ENCODE measurements at regions of chr2 and their contacts with region 1.

Region 1: DNA sequence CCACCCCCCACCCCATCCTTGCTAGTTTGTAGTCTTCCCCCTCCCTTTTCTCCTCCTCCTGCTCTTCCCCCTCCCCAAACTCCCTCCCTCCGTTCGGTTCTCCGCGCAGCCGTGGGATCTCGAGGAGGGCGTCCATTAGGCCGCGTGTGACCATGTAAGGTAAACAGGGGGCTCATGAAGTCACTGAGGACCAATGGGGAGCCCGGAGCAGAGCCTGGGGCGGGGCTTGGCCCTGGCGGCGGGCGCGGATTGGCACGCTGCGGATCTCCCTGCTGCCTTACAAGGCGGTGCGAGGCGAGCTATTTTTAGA is 246 bp upstream of the KLF7 start:
- DNase-seq: peak; percentile 98 to 99
- H3K4me3 ChIP-seq: peak overlapping the region; percentile 54 to 97 (median 76)
- H3K27ac ChIP-seq: peak overlapping the region; percentile 99
- H3K4me1 ChIP-seq: peaks cover 0 to 23% (median 20%) of the 10 kb centered on the region in 4 experiments; a peak in 4 of 7 replicates
- H3K27me3 ChIP-seq: no peaks in the 10 kb centered on the region; a peak in 2 of 7 replicates
- CTCF ChIP-seq: no peak; a peak in 1 of 4 replicates
- EP300 ChIP-seq: peak in 1 of 2 experiments; percentile 79; a peak in 1 of 3 replicates
- POLR2A ChIP-seq: no peak
- RAD21 ChIP-seq: no peak

Region 2: DNA sequence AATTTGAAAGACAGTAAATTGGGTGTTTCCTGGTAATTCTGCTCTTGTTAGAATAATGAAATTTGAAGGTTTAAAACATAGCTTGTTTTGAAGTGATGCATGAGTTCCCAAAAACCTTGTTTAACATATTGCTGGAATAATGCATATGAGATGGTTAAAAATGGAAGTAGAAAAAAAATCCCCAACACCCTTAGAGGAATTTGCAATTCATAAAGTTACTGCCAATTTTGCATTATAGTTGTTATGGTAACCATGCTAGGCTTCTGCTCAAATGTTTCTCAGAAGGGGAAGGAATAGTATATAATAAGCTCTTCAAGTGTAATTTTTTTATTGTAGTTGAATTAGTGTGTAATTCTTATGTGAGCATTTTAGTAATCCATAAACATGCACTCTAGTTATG is 351.5 kb before region 1 on chr2:
- CTCF ChIA-PET with region 1: no interaction called
- POLR2A ChIA-PET with region 1: no interaction called
- DNase-seq: no peak
- H3K4me3 ChIP-seq: peak overlapping the region in 1 of 4 experiments; percentile 2; a peak in 1 of 8 replicates
- H3K27ac ChIP-seq: no peak overlapping the region
- H3K4me1 ChIP-seq: peaks cover 0 to 12% (median 2%) of the 10 kb centered on the region in 4 experiments; a peak in 2 of 7 replicates
- H3K27me3 ChIP-seq: no peaks in the 10 kb centered on the region
- CTCF ChIP-seq: no peak
- EP300 ChIP-seq: no peak
- POLR2A ChIP-seq: no peak
- RAD21 ChIP-seq: no peak

Region 3: GRCh38 chr2:207115715-207116364 is 50.2 kb before region 1 on chr2:
- CTCF ChIA-PET with region 1: no interaction called
- POLR2A ChIA-PET with region 1: no interaction called
- DNase-seq: no peak
- H3K4me3 ChIP-seq: no peak overlapping the region
- H3K27ac ChIP-seq: no peak overlapping the region
- H3K4me1 ChIP-seq: no peaks in the 10 kb centered on the region; a peak in 1 of 7 replicates
- H3K27me3 ChIP-seq: no peaks in the 10 kb centered on the region
- CTCF ChIP-seq: peak in 2 of 3 experiments; percentile 4 to 27; a peak in 1 of 4 replicates
- EP300 ChIP-seq: no peak
- POLR2A ChIP-seq: no peak
- RAD21 ChIP-seq: peak; percentile 9 to 34; a peak in 3 of 4 replicates

Region 4: GRCh38 chr2:207143215-207144172 is 22.5 kb before region 1 on chr2:
- CTCF ChIA-PET with region 1: interaction called, 3 read pairs
- POLR2A ChIA-PET with region 1: interaction called, 15 read pairs
- DNase-seq: peak in 1 of 2 experiments; percentile 49
- H3K4me3 ChIP-seq: no peak overlapping the region
- H3K27ac ChIP-seq: no peak overlapping the region
- H3K4me1 ChIP-seq: peaks cover 3 to 14% (median 8%) of the 10 kb centered on the region in 4 experiments; a peak in 5 of 7 replicates
- H3K27me3 ChIP-seq: no peaks in the 10 kb centered on the region
- CTCF ChIP-seq: no peak
- EP300 ChIP-seq: no peak
- POLR2A ChIP-seq: no peak
- RAD21 ChIP-seq: no peak

Region 5: GRCh38 chr2:207149249-207150213 is 16.5 kb before region 1 on chr2:
- CTCF ChIA-PET with region 1: interaction called, 6 read pairs
- POLR2A ChIA-PET with region 1: interaction called, 103 read pairs
- DNase-seq: no peak
- H3K4me3 ChIP-seq: no peak overlapping the region
- H3K27ac ChIP-seq: no peak overlapping the region
- H3K4me1 ChIP-seq: peaks cover 10 to 26% (median 22%) of the 10 kb centered on the region in 4 experiments; a peak in 6 of 7 replicates
- H3K27me3 ChIP-seq: no peaks in the 10 kb centered on the region
- CTCF ChIP-seq: no peak
- EP300 ChIP-seq: no peak
- POLR2A ChIP-seq: no peak
- RAD21 ChIP-seq: no peak

Region 6: GRCh38 chr2:207176247-207176646 is 10.3 kb after region 1 on chr2:
- CTCF ChIA-PET with region 1: interaction called, 3 read pairs
- POLR2A ChIA-PET with region 1: interaction called, 22 read pairs
- DNase-seq: no peak
- H3K4me3 ChIP-seq: no peak overlapping the region
- H3K27ac ChIP-seq: no peak overlapping the region
- H3K4me1 ChIP-seq: no peaks in the 10 kb centered on the region
- H3K27me3 ChIP-seq: no peaks in the 10 kb centered on the region
- CTCF ChIP-seq: no peak
- EP300 ChIP-seq: no peak
- POLR2A ChIP-seq: no peak
- RAD21 ChIP-seq: no peak

Region 7: DNA sequence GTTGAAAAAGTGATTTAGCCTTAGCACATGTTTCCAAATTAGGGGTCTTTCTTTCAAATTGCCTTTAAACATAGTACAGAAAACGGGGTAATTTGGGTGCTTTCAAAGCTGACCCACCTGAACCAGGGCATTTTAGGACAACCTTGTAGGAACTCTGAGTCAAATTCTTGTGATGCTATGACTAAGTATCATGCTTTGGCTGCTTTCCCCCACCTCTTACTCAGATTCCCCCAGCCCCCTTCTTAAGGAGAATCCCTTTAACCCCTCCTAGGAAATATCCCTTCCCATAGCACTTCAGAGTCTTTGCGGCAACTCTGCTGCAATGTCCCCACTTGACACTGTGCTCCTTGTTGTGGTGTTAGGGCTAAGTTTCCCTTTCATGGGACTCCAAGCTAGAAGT is 18.4 kb after region 1 on chr2:
- CTCF ChIA-PET with region 1: no interaction called
- POLR2A ChIA-PET with region 1: interaction called, 10 read pairs
- DNase-seq: no peak
- H3K4me3 ChIP-seq: no peak overlapping the region
- H3K27ac ChIP-seq: no peak overlapping the region
- H3K4me1 ChIP-seq: no peaks in the 10 kb centered on the region
- H3K27me3 ChIP-seq: no peaks in the 10 kb centered on the region
- CTCF ChIP-seq: no peak
- EP300 ChIP-seq: no peak
- POLR2A ChIP-seq: no peak
- RAD21 ChIP-seq: no peak

Region 8: DNA sequence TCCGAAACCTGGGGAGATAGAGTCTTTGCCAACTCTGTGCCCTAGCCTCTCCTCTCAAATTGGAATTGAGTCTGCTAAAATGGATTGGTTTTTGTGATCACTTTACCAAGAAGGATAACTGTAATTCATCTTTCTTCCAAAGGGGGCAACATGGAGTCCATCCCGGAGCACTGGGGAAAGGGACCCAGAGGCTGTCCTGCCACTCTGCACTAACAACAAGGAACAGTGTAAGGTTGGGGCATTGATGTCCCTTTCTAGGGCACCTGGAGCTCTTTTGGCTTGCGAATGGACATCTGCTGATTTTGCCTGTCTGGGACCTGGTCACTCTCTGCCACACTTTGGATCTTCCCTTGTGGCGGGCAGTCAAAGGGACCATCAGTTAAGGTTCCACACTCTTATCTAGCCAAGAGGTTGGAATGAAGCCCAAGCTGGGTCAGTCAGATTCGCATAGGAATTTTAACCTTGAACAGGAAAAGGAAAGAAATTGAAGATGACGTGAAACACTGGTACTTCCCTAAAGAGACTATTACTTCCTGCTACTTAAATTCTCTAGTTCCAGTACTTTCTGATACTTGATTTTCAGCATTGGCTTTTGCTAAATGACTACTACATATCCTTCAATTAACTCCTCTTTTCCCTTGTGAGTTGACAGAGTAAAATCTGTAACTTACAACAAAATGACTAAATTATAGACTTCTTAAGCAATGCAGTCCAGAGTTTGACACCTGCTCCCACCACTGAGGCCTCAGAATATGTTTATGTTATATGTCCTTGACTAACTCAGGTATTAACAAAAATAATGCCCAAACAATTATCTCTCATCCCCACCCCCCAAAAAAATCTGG is 64.5 kb after region 1 on chr2:
- CTCF ChIA-PET with region 1: interaction called, 4 read pairs
- POLR2A ChIA-PET with region 1: interaction called, 31 read pairs
- DNase-seq: peak in 1 of 2 experiments; percentile 62
- H3K4me3 ChIP-seq: no peak overlapping the region
- H3K27ac ChIP-seq: no peak overlapping the region
- H3K4me1 ChIP-seq: peaks cover 8 to 22% (median 18%) of the 10 kb centered on the region in 4 experiments
- H3K27me3 ChIP-seq: no peaks in the 10 kb centered on the region
- CTCF ChIP-seq: peak; percentile 31 to 79 (median 61); a peak in 3 of 4 replicates
- EP300 ChIP-seq: no peak
- POLR2A ChIP-seq: no peak
- RAD21 ChIP-seq: peak; percentile 59 to 64

Region 9: GRCh38 chr2:207274530-207275189 is 108.7 kb after region 1 on chr2:
- CTCF ChIA-PET with region 1: no interaction called
- POLR2A ChIA-PET with region 1: no interaction called
- DNase-seq: no peak
- H3K4me3 ChIP-seq: no peak overlapping the region
- H3K27ac ChIP-seq: no peak overlapping the region
- H3K4me1 ChIP-seq: no peaks in the 10 kb centered on the region
- H3K27me3 ChIP-seq: no peaks in the 10 kb centered on the region
- CTCF ChIP-seq: no peak
- EP300 ChIP-seq: no peak
- POLR2A ChIP-seq: no peak
- RAD21 ChIP-seq: no peak

Region 10: DNA sequence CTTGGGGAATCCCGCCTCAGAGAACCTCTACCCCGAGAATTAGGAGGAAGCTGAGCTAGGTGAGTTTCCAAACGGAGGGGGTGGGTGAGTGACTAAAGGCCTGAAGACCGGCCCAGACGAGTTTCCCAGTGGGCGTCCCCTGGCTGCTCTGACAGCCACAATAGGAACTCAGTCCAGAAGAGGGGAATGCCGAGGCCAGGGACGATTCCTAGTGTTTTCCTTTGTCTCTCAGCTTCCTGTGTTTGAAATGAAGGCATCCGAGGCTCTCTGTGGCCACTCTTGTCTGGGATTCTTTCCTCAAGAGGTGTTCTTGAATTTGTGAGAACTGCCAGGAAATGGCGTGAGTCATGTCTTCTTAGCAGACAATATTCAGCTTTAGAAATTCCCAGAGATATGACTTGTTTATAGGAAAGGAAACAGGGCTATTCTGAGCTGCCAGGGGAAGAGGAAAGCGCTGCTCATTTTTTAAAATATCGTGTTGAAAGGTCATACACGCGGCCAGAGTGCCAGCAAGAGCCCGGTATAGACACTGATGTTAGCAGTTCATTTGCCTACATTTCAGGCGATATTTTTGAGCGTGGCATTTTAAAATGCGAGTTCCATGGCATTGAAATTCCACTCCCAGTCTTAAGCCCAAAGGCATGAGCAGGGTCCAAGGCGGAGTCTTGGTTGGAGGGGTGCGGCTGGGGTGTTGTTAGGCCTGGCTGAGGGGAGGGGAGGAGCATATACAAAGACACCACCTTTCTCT is 168.8 kb after region 1 on chr2:
- CTCF ChIA-PET with region 1: interaction called, 3 read pairs
- POLR2A ChIA-PET with region 1: interaction called, 11 read pairs
- DNase-seq: peak; percentile 64 to 79
- H3K4me3 ChIP-seq: peak overlapping the region in 3 of 4 experiments; percentile 6 to 49 (median 12); a peak in 4 of 8 replicates
- H3K27ac ChIP-seq: peak overlapping the region; percentile 77
- H3K4me1 ChIP-seq: peaks cover 4 to 20% (median 17%) of the 10 kb centered on the region in 4 experiments; a peak in 6 of 7 replicates
- H3K27me3 ChIP-seq: no peaks in the 10 kb centered on the region
- CTCF ChIP-seq: no peak
- EP300 ChIP-seq: peak in 1 of 2 experiments; percentile 81; a peak in 1 of 3 replicates
- POLR2A ChIP-seq: peak; percentile 49 to 84
- RAD21 ChIP-seq: peak in 1 of 2 experiments; percentile 26; a peak in 1 of 4 replicates

Measured in H1 (cell line).